Transverse colon (tissue), 4 donors: ENCODE measurements at regions of chr7 and their contacts with region 1.

Region 1: GRCh38 chr7:10718768-10719167 is 254.9 kb upstream of the PHF14 start:
- DNase-seq: no peak
- H3K4me3 ChIP-seq: no peak overlapping the region
- H3K27ac ChIP-seq: no peak overlapping the region
- H3K4me1 ChIP-seq: no peaks in the 10 kb centered on the region
- H3K27me3 ChIP-seq: no peaks in the 10 kb centered on the region
- CTCF ChIP-seq: no peak
- EP300 ChIP-seq: no peak
- POLR2A ChIP-seq: no peak

Region 2: DNA sequence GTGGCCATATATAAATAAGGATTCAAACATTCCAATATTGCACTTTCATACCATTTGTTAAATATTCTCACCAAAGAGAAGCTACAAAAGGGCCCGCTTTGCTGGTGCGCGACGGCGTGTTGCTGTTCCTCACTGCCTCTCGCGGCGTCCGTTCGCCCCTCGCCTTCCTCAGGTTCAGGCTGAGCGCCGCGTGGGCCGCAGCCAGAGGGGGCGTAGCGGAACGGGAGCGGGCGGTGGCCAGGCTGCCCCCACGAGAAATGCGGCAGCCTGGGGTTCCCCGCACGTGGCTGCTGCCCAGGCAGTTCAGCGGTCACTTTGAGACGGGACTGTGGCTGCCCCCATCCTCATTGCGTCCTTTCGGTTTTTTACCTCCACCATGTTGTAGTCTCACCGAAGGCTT is 1752.2 kb after region 1 on chr7:
- in situ Hi-C with region 1: no loop called
- intact Hi-C with region 1: loop called (anchors 5 kb)
- DNase-seq: no peak
- H3K4me3 ChIP-seq: no peak overlapping the region
- H3K27ac ChIP-seq: no peak overlapping the region
- H3K4me1 ChIP-seq: no peaks in the 10 kb centered on the region
- H3K27me3 ChIP-seq: no peaks in the 10 kb centered on the region
- CTCF ChIP-seq: no peak
- EP300 ChIP-seq: no peak
- POLR2A ChIP-seq: no peak